H1 (cell line): ENCODE measurements at regions of chr2 and their contacts with region 1.

Region 1: GRCh38 chr2:80086831-80087230 is 217.7 kb downstream of the LRRTM1 start:
- DNase-seq: no peak
- H3K4me3 ChIP-seq: no peak overlapping the region
- H3K27ac ChIP-seq: no peak overlapping the region
- H3K4me1 ChIP-seq: no peaks in the 10 kb centered on the region
- H3K27me3 ChIP-seq: no peaks in the 10 kb centered on the region
- CTCF ChIP-seq: no peak
- EP300 ChIP-seq: no peak
- POLR2A ChIP-seq: no peak
- RAD21 ChIP-seq: no peak

Region 2: GRCh38 chr2:79855264-79856006 is 231.4 kb before region 1 on chr2:
- CTCF ChIA-PET with region 1: no interaction called
- POLR2A ChIA-PET with region 1: no interaction called
- DNase-seq: peak; percentile 33 to 59
- H3K4me3 ChIP-seq: no peak overlapping the region
- H3K27ac ChIP-seq: no peak overlapping the region
- H3K4me1 ChIP-seq: peaks cover 0 to 8% (median 2%) of the 10 kb centered on the region in 4 experiments; a peak in 3 of 7 replicates
- H3K27me3 ChIP-seq: no peaks in the 10 kb centered on the region
- CTCF ChIP-seq: peak; percentile 67 to 87 (median 75)
- EP300 ChIP-seq: no peak
- POLR2A ChIP-seq: no peak
- RAD21 ChIP-seq: peak; percentile 92 to 93

Region 3: DNA sequence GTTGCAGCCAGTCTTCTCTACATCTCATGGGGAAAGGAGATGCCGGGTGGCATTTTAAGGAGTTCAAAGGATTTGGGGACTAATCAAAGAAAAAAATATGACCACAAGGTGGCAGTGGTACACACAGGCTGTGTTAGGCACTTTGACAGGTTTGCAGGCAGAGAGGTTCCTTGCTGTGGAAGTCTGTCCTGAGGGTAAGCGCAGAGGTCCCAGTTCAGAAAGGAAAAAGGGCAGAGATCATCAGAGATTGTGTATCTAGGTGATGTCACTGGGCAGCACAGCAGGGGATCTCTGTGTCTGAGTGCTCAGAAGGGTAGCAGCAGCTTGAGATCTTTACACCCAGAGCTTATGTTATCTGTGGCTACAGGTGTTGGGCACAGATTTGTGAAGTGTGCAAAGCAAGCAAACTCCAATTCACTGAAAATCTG is 13.7 kb before region 1 on chr2:
- CTCF ChIA-PET with region 1: interaction called, 19 read pairs
- POLR2A ChIA-PET with region 1: no interaction called
- DNase-seq: no peak
- H3K4me3 ChIP-seq: no peak overlapping the region
- H3K27ac ChIP-seq: no peak overlapping the region
- H3K4me1 ChIP-seq: no peaks in the 10 kb centered on the region
- H3K27me3 ChIP-seq: no peaks in the 10 kb centered on the region; a peak in 1 of 7 replicates
- CTCF ChIP-seq: peak; percentile 21 to 77 (median 73)
- EP300 ChIP-seq: no peak
- POLR2A ChIP-seq: no peak
- RAD21 ChIP-seq: peak; percentile 85 to 88